ENCODE measurements at regions of chr5 and their contacts with region 1.

Region 1: GRCh38 chr5:28766565-28767158 is 1728.3 kb upstream of the CDH9 start:
- DNase-seq: no peak
- H3K4me3 ChIP-seq: no peak overlapping the region
- H3K27ac ChIP-seq: no peak overlapping the region
- H3K4me1 ChIP-seq: no peaks in the 10 kb centered on the region
- H3K27me3 ChIP-seq: no peaks in the 10 kb centered on the region
- CTCF ChIP-seq: peak in 2 of 3 experiments; percentile 20 to 60

Region 2: DNA sequence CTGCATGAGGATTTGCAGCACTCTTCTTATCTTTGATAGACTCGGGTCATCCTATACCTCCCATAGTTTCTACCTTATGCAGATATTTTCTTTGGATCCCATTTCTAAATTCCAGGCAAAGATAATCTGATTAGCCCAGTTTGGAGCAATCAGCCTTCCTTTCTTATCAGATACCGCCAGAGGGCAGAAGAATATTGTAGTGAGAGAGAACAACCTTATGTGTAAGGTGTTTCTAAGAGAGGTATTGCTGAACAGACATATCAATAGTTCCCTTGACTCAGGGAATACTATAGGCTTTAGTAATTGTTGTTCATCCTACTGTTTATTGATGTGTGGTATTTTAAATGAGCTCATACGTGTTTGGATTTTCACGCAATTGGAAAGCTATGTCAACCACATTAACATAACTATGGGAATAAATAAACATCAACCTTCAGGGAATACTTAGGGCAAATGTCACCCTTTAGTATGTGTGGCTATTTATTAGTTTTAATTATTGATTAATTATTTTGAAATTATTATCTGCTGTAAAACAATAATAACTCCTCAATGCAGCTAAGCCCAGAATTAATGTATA is 293.0 kb before region 1 on chr5:
- intact Hi-C with region 1: loop called (anchors 2 kb)
- DNase-seq: no peak
- H3K4me3 ChIP-seq: no peak overlapping the region
- H3K27ac ChIP-seq: no peak overlapping the region
- H3K4me1 ChIP-seq: no peaks in the 10 kb centered on the region
- H3K27me3 ChIP-seq: no peaks in the 10 kb centered on the region
- CTCF ChIP-seq: peak in 2 of 3 experiments; percentile 26 to 43

Region 3: DNA sequence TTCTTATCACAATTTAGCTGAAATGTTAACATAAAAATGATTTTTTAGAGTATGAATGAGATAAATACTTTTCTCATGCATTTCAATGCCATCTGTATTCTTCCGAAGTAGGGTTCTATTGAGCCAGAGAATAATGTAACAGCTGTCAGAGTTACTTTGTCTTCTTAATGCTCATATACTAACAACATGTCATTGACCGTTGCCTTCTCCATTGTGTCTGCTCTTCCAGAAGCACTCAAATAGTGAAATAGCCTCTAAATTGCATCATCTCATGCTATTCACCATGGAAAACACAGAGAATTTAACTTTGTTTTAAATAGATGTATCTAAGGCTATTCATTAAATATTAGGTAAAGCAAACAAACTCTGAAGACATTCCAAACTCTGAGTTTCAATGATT is 147.6 kb after region 1 on chr5:
- intact Hi-C with region 1: no loop called
- DNase-seq: no peak
- H3K4me3 ChIP-seq: no peak overlapping the region
- H3K27ac ChIP-seq: no peak overlapping the region
- H3K4me1 ChIP-seq: no peaks in the 10 kb centered on the region
- H3K27me3 ChIP-seq: no peaks in the 10 kb centered on the region
- CTCF ChIP-seq: no peak

Measured in ascending aorta (tissue), 2 donors.